Activated CD8-positive, alpha-beta T cell treated with anti-CD3 and anti-CD28 coated beads for 36 hours (primary cell): ENCODE measurements at regions of chr18 and their contacts with region 1.

Region 1: DNA sequence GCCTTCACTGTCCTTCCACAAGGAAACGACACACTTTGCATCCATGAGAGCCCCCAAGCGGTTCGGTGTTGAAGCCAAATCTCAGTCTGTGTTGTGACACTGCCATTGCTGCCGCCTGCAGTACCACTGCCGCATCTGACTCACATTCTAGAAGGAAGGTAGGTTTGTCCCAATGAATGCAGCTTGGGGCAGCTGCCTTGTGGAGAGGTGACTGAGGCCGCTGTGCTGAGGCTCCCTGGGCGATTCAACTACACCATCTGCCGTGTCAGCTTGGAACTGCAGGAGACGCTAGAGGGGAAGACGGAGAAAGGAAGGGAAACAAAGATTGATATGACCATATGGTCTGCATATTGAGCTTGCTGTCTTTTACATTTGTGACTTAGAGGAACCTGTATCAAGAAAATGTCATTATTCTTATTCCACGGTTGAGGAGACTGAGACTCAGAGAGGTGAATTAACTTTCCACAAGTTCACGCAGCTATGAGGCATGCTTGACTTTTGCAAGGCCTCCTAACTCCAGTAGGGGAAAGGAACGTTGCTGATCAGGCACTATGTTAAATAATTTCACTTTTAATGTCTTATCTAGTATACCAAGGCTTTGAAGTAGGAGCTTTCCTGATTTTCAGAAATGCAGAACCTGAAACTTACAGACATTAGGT is 43.5 kb upstream of the LMAN1 start:
- DNase-seq: peak; percentile 87
- ATAC-seq: peak; percentile 100
- H3K4me3 Mint-ChIP-seq: no peak overlapping the region
- H3K27ac Mint-ChIP-seq: no peak overlapping the region
- H3K4me1 Mint-ChIP-seq: no peaks in the 10 kb centered on the region
- H3K27me3 Mint-ChIP-seq: peaks cover 7% of the 10 kb centered on the region
- CTCF ChIP-seq: peak; percentile 97

Region 2: DNA sequence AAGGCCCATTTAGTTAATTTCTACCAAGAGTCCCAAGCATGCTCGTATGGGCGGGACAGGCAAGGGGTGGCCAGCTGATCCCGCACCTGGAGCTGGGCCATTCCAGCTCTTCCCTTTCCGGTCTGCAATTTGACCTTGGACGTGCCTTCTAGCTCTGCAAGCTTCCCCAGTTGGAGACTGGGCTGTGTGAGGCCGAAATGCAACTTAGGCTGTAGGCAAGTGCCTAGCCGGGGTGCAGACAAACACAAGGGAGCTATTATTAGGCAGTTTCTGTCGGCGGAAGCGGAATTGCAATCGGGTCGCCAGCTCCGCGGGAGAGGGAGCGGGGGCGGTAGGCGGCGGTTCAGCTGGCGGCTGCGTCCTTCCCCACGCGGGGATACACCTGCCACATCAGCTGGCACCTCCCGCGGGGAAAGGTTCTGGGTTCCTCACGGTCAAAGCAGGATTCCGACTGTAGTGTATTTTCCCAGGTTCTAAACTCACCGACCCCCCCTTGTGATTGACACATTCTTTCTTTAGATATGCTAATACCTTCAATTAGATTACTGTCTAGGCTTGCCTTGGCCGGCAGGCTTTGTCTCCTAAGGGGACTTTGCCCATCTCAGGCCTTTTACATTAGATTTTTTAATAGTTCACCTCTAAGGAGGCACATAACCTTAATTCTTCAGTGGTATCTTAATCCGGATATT is 555.0 kb before region 1 on chr18:
- CTCF ChIA-PET with region 1: no interaction called
- POLR2A ChIA-PET with region 1: no interaction called
- intact Hi-C with region 1: no loop called
- DNase-seq: peak; percentile 10
- ATAC-seq: no peak
- H3K4me3 Mint-ChIP-seq: no peak overlapping the region
- H3K27ac Mint-ChIP-seq: no peak overlapping the region
- H3K4me1 Mint-ChIP-seq: peaks cover 2% of the 10 kb centered on the region
- H3K27me3 Mint-ChIP-seq: peaks cover 51% of the 10 kb centered on the region
- CTCF ChIP-seq: no peak

Region 3: GRCh38 chr18:59189746-59190145 is 212.8 kb before region 1 on chr18:
- CTCF ChIA-PET with region 1: no interaction called
- POLR2A ChIA-PET with region 1: no interaction called
- intact Hi-C with region 1: no loop called
- DNase-seq: no peak
- ATAC-seq: no peak
- H3K4me3 Mint-ChIP-seq: no peak overlapping the region
- H3K27ac Mint-ChIP-seq: no peak overlapping the region
- H3K4me1 Mint-ChIP-seq: no peaks in the 10 kb centered on the region
- H3K27me3 Mint-ChIP-seq: peaks cover 5% of the 10 kb centered on the region
- CTCF ChIP-seq: no peak

Region 4: GRCh38 chr18:59249205-59249774 is 153.3 kb before region 1 on chr18:
- CTCF ChIA-PET with region 1: interaction called, 71 read pairs
- POLR2A ChIA-PET with region 1: interaction called, 3 read pairs
- intact Hi-C with region 1: loop called (anchors 2 kb)
- DNase-seq: peak; percentile 57
- ATAC-seq: peak; percentile 49
- H3K4me3 Mint-ChIP-seq: no peak overlapping the region
- H3K27ac Mint-ChIP-seq: no peak overlapping the region
- H3K4me1 Mint-ChIP-seq: no peaks in the 10 kb centered on the region
- H3K27me3 Mint-ChIP-seq: peaks cover 35% of the 10 kb centered on the region
- CTCF ChIP-seq: peak; percentile 63

Region 5: DNA sequence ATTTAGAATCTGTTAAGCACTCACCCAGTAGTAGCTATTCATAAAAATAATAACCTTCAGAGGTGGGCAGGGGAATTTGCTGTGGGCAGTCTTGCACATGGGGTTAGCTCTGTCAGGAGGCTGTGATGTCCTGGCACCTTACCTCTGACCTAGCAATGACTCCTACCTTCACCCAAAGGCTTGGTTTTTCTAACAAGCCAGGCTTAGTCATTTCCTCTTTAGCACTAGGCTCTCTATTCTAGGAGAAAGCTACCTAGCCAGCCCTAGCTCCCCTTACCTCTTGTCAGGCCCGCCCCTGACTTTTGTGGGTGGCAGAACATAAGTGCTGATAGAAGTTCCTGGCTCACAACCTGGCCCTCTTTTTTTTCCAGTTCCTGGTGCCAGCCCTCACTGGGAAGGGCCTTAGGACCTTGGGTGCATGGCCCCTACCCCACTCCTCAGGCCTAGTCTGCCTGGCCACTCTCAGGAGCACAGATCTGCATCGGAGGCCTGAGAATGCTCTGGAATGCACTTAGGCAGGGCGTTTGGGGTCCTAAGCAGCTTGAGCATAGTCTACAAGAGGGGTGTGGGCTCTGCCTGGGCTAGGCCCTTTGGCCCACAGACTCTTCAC is 101.8 kb before region 1 on chr18:
- CTCF ChIA-PET with region 1: interaction called, 219 read pairs
- POLR2A ChIA-PET with region 1: no interaction called
- intact Hi-C with region 1: no loop called
- DNase-seq: peak; percentile 28
- ATAC-seq: peak; percentile 98
- H3K4me3 Mint-ChIP-seq: no peak overlapping the region
- H3K27ac Mint-ChIP-seq: no peak overlapping the region
- H3K4me1 Mint-ChIP-seq: peaks cover 3% of the 10 kb centered on the region
- H3K27me3 Mint-ChIP-seq: peaks cover 13% of the 10 kb centered on the region
- CTCF ChIP-seq: no peak

Region 6: DNA sequence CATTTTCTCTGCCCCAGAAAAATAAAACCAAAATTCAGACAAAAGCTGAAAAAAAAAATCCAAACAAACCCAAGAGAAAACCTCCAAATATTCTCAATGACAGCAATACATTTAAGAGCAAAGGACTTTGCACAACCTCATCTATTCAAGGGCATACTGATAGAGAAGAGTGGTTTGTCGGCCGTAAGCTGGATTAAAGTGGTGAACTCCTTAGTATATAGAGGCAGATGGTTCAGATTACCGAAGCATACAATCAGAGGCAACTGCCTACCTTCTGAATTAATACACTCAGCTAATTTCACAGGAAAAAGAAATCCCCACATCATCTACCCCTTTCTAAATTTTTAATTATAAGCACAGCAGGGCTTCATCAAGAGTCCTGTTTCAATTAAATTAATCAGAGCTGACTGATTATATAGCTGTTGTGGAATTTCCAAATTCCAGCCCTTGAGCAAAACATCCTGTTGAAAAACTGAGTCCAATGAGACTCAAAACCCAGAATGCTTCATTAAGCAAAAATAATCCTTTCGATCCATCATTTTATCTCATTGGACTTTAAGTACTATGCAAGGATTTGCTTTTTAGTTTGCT is 84.0 kb before region 1 on chr18 and contains the start of gene CPLX4:
- CTCF ChIA-PET with region 1: interaction called, 219 read pairs
- POLR2A ChIA-PET with region 1: interaction called, 3 read pairs
- intact Hi-C with region 1: no loop called
- DNase-seq: no peak
- ATAC-seq: no peak
- H3K4me3 Mint-ChIP-seq: no peak within 1 kb of the TSS
- H3K27ac Mint-ChIP-seq: no peak within 1 kb of the TSS
- H3K4me1 Mint-ChIP-seq: no peaks in the 10 kb centered on the region
- H3K27me3 Mint-ChIP-seq: peaks cover 25% of the 10 kb centered on the region
- CTCF ChIP-seq: no peak
- total RNA-seq, gene CPLX4: not detected

Region 7: DNA sequence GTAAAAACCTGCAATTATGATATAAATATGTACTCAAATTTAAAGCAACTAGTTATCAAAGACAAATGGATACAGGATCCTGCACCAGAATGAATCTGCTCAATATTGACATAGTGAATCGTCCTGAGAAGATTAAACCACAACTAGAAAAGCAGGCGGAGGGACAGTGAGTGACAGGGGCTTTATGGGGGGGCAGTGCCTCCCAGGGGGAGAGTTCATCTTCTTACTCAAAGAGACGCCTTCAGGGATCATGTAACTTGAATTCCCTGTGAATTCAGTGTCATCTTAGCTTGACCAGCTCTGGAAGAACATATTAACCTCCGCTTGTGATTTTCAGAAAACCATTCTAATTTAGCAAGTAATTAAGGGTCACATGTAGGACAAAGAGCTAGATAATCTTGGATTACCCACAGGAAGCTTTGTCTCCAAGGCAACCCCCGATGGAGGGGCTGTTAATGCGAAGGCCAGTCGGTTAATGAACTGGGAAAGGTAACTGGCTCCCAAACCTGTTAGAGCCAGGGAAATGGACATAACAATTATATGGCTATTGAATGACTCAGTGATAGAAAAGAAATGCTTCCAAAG is 26.1 kb before region 1 on chr18:
- CTCF ChIA-PET with region 1: interaction called, 11 read pairs
- POLR2A ChIA-PET with region 1: no interaction called
- intact Hi-C with region 1: no loop called
- DNase-seq: no peak
- ATAC-seq: no peak
- H3K4me3 Mint-ChIP-seq: no peak overlapping the region
- H3K27ac Mint-ChIP-seq: no peak overlapping the region
- H3K4me1 Mint-ChIP-seq: peaks cover 18% of the 10 kb centered on the region
- H3K27me3 Mint-ChIP-seq: peaks cover 48% of the 10 kb centered on the region
- CTCF ChIP-seq: no peak

Region 8: GRCh38 chr18:59555995-59556659 is 153.6 kb after region 1 on chr18:
- CTCF ChIA-PET with region 1: no interaction called
- POLR2A ChIA-PET with region 1: no interaction called
- intact Hi-C with region 1: no loop called
- DNase-seq: no peak
- ATAC-seq: no peak
- H3K4me3 Mint-ChIP-seq: no peak overlapping the region
- H3K27ac Mint-ChIP-seq: no peak overlapping the region
- H3K4me1 Mint-ChIP-seq: no peaks in the 10 kb centered on the region
- H3K27me3 Mint-ChIP-seq: no peaks in the 10 kb centered on the region
- CTCF ChIP-seq: no peak